ENCODE measurements at regions of chr3 and their contacts with region 1.

Region 1: DNA sequence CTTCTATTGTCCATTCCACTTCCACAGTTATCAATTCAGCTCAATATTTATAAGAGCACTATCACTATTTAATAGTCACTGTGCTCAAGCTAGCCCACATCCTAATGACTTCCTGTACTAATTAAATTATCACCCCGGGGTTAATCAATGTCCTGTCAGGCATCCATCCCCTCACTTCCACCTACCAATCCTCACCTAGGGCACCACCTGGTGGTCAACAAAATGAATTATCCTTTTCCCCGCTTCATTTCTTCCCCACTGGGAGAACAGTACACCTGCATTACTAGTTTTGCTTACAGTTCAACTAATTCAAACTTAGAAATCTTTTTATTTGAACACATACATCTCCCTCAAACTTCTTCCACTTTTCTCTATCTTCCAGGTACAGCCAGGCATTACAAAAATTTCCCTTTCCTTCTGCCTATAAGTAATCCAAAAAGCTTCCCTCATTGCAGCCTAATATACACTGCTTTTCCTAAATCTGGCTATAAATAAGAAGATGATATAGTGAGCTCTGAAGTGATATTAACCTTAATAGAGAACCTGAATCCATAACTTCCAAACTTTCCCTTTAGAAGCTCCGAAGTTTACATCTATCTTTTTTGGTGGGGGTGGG is 68.5 kb downstream of the TMCC1 start:
- DNase-seq: peak; percentile 38 to 59 (median 50)
- H3K4me3 ChIP-seq: no peak overlapping the region
- H3K4me3 Mint-ChIP-seq: no peak overlapping the region
- H3K27ac ChIP-seq: no peak overlapping the region
- H3K27ac Mint-ChIP-seq: peak overlapping the region in 4 of 7 donors; percentile 9 to 38 (median 18)
- H3K4me1 ChIP-seq: peaks cover 19% of the 10 kb centered on the region
- H3K4me1 Mint-ChIP-seq: peaks cover 17 to 32% (median 19%) of the 10 kb centered on the region in 4 donors
- H3K27me3 ChIP-seq: no peaks in the 10 kb centered on the region
- H3K27me3 Mint-ChIP-seq: no peaks in the 10 kb centered on the region

Region 2: GRCh38 chr3:129343643-129344332 is 481.2 kb before region 1 on chr3:
- CTCF ChIA-PET with region 1: no interaction called
- POLR2A ChIA-PET with region 1: no interaction called
- intact Hi-C with region 1: loop called (anchors 5 kb)
- DNase-seq: peak in 4 of 5 donors; percentile 10 to 22 (median 11)
- H3K4me3 ChIP-seq: no peak overlapping the region
- H3K4me3 Mint-ChIP-seq: peak overlapping the region in 5 of 8 donors; percentile 13 to 78 (median 52)
- H3K27ac ChIP-seq: no peak overlapping the region
- H3K27ac Mint-ChIP-seq: no peak overlapping the region
- H3K4me1 ChIP-seq: peaks cover 10% of the 10 kb centered on the region
- H3K4me1 Mint-ChIP-seq: peaks cover 1 to 9% (median 4%) of the 10 kb centered on the region in 4 donors
- H3K27me3 ChIP-seq: no peaks in the 10 kb centered on the region
- H3K27me3 Mint-ChIP-seq: peaks cover 9 to 15% of the 10 kb centered on the region in 2 donors

Region 3: DNA sequence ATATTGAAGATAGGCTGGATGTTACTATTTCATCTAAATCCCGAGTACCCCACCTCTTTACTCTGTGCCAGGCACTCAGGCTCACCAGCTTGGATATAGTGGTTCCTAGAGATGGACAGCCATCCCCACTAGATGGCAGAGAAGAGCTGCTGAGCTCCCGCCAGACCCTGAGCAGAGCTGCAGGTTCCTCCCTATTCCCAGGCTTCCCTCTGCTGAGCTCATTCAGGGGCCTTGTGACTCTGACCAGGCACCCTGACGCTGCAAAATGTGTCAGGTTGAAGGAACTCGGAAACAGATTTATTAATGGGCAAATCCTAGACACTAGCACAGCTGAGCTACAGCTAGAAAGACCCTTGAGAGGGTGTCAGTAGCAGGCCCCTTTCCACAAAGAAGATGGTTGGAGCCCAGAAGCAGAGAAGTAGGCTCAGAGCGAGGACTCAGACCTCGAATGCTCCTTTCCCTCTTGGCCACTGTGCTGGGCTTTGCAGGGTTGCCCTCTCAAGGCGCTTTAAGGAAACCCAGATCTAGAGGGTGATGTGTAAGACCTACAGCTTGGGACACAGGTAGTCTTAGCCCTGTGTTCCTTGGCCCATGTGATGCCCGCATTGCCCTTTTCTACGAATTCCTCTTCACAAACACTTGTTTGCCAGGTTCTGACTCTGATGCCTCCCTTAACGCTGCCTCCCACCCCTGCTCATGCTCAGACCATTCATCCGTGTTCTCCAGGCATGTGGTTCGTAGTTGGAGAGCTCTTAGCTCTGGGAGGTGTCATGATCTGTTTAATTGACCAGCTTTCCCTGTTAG is 334.6 kb before region 1 on chr3:
- CTCF ChIA-PET with region 1: interaction called, 169 read pairs
- POLR2A ChIA-PET with region 1: interaction called, 4 read pairs
- intact Hi-C with region 1: loop called (anchors 1 kb)
- DNase-seq: peak in 4 of 5 donors; percentile 48 to 61 (median 56)
- H3K4me3 ChIP-seq: no peak overlapping the region
- H3K4me3 Mint-ChIP-seq: no peak overlapping the region
- H3K27ac ChIP-seq: no peak overlapping the region
- H3K27ac Mint-ChIP-seq: peak overlapping the region in 4 of 7 donors; percentile 30 to 55 (median 46)
- H3K4me1 ChIP-seq: no peaks in the 10 kb centered on the region
- H3K4me1 Mint-ChIP-seq: peaks cover 0 to 4% (median 0%) of the 10 kb centered on the region in 4 donors
- H3K27me3 ChIP-seq: no peaks in the 10 kb centered on the region
- H3K27me3 Mint-ChIP-seq: no peaks in the 10 kb centered on the region

Region 4: DNA sequence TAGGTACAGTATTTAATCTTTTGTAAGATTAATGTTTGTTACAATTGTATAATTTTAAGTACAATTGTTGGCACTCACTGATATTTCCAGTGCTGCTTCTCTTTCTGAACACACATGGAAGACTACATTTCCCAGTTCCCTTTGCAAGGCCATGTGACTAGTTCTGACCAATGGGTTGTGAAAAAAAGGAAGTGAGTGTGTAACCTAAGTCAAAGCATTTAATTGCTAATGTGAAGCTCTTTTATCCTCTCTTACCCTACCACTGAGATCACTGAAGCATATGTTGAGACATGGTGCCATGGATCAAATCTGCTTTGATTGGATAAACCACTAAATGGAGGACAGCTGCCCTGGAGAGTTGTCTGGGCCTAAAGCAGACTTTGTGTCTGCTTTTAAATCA is 134.6 kb before region 1 on chr3:
- CTCF ChIA-PET with region 1: no interaction called
- POLR2A ChIA-PET with region 1: no interaction called
- intact Hi-C with region 1: no loop called
- DNase-seq: peak; percentile 61 to 73 (median 63)
- H3K4me3 ChIP-seq: no peak overlapping the region
- H3K4me3 Mint-ChIP-seq: no peak overlapping the region
- H3K27ac ChIP-seq: no peak overlapping the region
- H3K27ac Mint-ChIP-seq: peak overlapping the region in 3 of 7 donors; percentile 10 to 55 (median 23)
- H3K4me1 ChIP-seq: no peaks in the 10 kb centered on the region
- H3K4me1 Mint-ChIP-seq: peaks cover 6 to 14% (median 9%) of the 10 kb centered on the region in 4 donors
- H3K27me3 ChIP-seq: no peaks in the 10 kb centered on the region
- H3K27me3 Mint-ChIP-seq: no peaks in the 10 kb centered on the region

Region 5: GRCh38 chr3:129777806-129778205 is 47.2 kb before region 1 on chr3:
- CTCF ChIA-PET with region 1: no interaction called
- POLR2A ChIA-PET with region 1: no interaction called
- intact Hi-C with region 1: no loop called
- DNase-seq: no peak
- H3K4me3 ChIP-seq: no peak overlapping the region
- H3K4me3 Mint-ChIP-seq: no peak overlapping the region
- H3K27ac ChIP-seq: no peak overlapping the region
- H3K27ac Mint-ChIP-seq: peak overlapping the region in 1 of 7 donors; percentile 14
- H3K4me1 ChIP-seq: no peaks in the 10 kb centered on the region
- H3K4me1 Mint-ChIP-seq: peaks cover 0 to 5% (median 3%) of the 10 kb centered on the region in 4 donors
- H3K27me3 ChIP-seq: no peaks in the 10 kb centered on the region
- H3K27me3 Mint-ChIP-seq: no peaks in the 10 kb centered on the region

Region 6: GRCh38 chr3:129809297-129809696 is 15.7 kb before region 1 on chr3:
- CTCF ChIA-PET with region 1: interaction called, 37 read pairs
- POLR2A ChIA-PET with region 1: no interaction called
- intact Hi-C with region 1: no loop called
- DNase-seq: no peak
- H3K4me3 ChIP-seq: no peak overlapping the region
- H3K4me3 Mint-ChIP-seq: no peak overlapping the region
- H3K27ac ChIP-seq: no peak overlapping the region
- H3K27ac Mint-ChIP-seq: no peak overlapping the region
- H3K4me1 ChIP-seq: no peaks in the 10 kb centered on the region
- H3K4me1 Mint-ChIP-seq: peaks cover 9 to 20% (median 13%) of the 10 kb centered on the region in 4 donors
- H3K27me3 ChIP-seq: no peaks in the 10 kb centered on the region
- H3K27me3 Mint-ChIP-seq: no peaks in the 10 kb centered on the region

Region 7: DNA sequence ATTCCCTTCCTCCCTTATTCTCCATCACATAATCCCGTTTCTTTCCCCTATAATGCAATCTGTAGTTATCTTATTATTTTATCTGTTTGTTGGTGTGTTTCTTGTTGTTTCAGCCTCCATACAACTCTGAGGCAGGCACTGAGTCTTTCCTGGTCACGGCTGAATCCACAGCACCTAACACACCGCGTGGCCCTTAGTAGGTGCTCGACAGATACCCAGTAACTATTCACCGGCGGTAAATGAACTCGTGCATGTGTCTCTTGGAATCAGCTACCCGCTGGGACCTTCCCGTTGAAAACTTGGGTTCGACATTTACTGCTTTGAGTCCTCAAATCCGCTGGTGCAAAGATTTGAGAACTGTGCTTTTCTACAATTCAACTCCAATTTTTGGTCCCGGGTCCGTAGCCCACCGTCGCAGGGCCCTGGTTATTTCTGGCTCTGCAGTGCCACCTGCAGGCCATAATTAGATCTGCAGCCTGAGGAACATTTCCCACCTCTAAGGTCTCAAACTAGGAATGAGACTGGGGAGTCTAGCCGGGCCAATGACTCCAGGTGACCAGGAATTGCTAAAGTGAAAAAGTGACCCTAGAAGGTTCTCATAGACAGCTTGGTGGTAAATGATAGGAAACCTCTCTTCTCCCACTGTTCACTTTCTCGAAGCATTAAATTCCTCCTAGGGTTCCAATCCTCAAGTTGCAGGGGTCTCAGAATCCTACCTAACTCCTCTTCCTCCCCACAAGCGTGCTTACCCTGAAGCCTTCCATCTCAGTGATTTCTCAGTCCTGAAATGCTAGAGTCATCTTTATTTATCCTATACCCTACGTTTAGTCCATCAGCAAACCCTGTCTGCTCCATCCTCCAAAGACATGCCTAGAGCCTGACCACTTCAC is 109.4 kb after region 1 on chr3:
- CTCF ChIA-PET with region 1: no interaction called
- POLR2A ChIA-PET with region 1: no interaction called
- intact Hi-C with region 1: loop called (anchors 1 kb)
- DNase-seq: peak in 4 of 5 donors; percentile 16 to 27 (median 24)
- H3K4me3 ChIP-seq: no peak overlapping the region
- H3K4me3 Mint-ChIP-seq: peak overlapping the region in 5 of 8 donors; percentile 18 to 50 (median 22)
- H3K27ac ChIP-seq: no peak overlapping the region
- H3K27ac Mint-ChIP-seq: peak overlapping the region in 1 of 7 donors; percentile 20
- H3K4me1 ChIP-seq: no peaks in the 10 kb centered on the region
- H3K4me1 Mint-ChIP-seq: peaks cover 9 to 20% (median 10%) of the 10 kb centered on the region in 4 donors
- H3K27me3 ChIP-seq: no peaks in the 10 kb centered on the region
- H3K27me3 Mint-ChIP-seq: peaks cover 2 to 5% of the 10 kb centered on the region in 2 donors